ENCODE measurements at regions of chr16 and their contacts with region 1.

Region 1: DNA sequence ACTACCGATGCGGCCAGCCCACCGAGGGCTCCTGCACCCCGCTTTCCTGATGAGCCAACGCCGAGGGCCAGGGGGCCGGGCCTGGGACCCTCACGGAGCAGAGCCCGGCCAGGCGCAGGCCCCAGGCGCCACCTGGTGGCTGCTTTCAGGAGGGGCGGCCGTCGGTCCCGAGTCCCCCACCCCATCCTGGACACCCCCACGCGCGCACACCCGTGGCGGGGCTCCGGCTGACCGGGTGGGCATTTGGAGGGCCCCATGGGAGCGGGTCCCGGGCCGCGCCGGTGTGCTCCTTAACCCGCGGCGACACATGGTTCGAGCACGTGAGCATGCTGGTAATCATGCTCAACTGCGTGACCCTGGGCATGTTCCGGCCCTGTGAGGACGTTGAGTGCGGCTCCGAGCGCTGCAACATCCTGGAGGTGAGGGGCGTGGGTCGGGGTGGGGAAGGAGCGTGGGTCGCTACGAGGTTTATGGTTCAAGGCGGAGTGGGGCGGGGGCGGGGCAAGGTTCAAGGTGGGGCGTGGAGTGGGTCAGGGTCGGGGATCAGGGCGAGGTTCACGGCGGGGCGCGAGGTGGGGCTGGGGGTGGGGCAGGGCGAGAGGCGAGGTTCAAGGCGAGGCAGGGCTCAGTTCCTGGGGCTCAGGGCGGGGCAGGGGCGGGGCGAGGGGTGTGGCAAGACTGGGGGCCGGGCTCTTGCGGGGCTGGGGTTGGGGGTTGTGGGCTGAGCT is 30.2 kb downstream of the TPSG1 start:
- DNase-seq: no peak

Region 2: GRCh38 chr16:813204-813915 is 381.5 kb before region 1 on chr16:
- intact Hi-C with region 1: loop called (anchors 10 kb)
- DNase-seq: no peak

Region 3: GRCh38 chr16:1105888-1106620 is 88.8 kb before region 1 on chr16:
- intact Hi-C with region 1: loop called (anchors 1 kb)
- DNase-seq: no peak

Region 4: GRCh38 chr16:1152651-1153259 is 42.1 kb before region 1 on chr16 and contains the start of gene CACNA1H:
- intact Hi-C with region 1: no loop called
- DNase-seq: no peak
- total RNA-seq, gene CACNA1H: 4.7 TPM

Region 5: GRCh38 chr16:1167276-1168107 is 27.3 kb before region 1 on chr16:
- intact Hi-C with region 1: no loop called
- DNase-seq: no peak